ENCODE measurements at regions of chr19 and their contacts with region 1.

Region 1: GRCh38 chr19:49224856-49225255 is 67.3 kb downstream of the TRPM4 start:
- DNase-seq: peak; percentile 46
- ATAC-seq: no peak
- H3K4me3 Mint-ChIP-seq: no peak overlapping the region
- H3K27ac Mint-ChIP-seq: no peak overlapping the region
- H3K4me1 Mint-ChIP-seq: peaks cover 5% of the 10 kb centered on the region
- H3K27me3 Mint-ChIP-seq: peaks cover 6% of the 10 kb centered on the region

Region 2: DNA sequence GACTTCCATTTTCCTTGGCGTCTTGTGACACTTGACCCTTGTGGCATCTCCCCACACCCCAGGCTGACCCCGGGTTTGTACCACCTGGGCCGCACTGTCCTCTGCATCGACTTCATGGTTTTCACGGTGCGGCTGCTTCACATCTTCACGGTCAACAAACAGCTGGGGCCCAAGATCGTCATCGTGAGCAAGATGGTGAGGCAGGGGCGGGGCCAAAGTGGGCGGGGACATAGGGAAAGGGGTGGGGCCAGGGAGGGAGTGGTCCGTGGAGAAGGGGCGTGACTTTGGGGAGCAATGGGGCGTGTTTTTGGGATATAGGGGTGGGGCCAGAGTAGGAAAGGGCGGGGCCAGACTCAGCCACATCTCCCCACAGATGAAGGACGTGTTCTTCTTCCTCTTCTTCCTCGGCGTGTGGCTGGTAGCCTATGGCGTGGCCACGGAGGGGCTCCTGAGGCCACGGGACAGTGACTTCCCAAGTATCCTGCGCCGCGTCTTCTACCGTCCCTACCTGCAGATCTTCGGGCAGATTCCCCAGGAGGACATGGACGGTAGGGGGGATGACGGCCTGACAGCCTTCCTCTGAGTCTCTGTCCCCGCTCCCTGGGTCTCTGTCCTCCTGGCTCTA is 24.5 kb before region 1 on chr19:
- CTCF ChIA-PET with region 1: interaction called, 16 read pairs
- DNase-seq: no peak
- ATAC-seq: no peak
- H3K4me3 Mint-ChIP-seq: no peak overlapping the region
- H3K27ac Mint-ChIP-seq: no peak overlapping the region
- H3K4me1 Mint-ChIP-seq: peaks cover 6% of the 10 kb centered on the region
- H3K27me3 Mint-ChIP-seq: peaks cover 7% of the 10 kb centered on the region

Region 3: DNA sequence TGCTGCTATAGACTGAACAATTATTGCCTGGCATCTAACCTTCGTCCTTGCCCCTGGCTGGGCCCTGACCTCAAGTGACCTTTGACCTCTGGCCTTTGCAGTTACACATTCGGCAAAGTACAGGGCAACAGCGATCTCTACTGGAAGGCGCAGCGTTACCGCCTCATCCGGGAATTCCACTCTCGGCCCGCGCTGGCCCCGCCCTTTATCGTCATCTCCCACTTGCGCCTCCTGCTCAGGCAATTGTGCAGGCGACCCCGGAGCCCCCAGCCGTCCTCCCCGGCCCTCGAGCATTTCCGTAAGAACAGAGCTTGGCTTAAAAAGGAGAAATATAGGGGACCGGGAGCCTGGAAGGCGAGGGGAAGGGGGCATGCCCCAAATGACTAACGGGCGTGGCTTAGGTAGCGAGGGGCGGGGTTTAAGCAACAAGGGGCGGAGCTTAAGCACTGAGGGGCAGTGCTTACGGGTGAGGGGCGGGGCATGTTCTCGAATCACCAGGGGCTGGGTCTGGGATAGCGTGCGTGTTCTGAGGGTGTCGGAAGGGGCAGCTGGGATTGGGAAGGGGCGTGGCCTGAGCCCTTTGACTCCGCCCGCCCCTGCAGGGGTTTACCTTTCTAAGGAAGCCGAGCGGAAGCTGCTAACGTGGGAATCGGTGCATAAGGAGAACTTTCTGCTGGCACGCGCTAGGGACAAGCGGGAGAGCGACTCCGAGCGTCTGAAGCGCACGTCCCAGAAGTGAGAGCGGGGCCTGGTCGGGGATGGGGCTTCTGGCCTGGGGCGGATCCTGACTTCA is 14.6 kb before region 1 on chr19:
- CTCF ChIA-PET with region 1: interaction called, 18 read pairs
- DNase-seq: peak; percentile 51
- ATAC-seq: peak; percentile 64
- H3K4me3 Mint-ChIP-seq: no peak overlapping the region
- H3K27ac Mint-ChIP-seq: no peak overlapping the region
- H3K4me1 Mint-ChIP-seq: peaks cover 9% of the 10 kb centered on the region
- H3K27me3 Mint-ChIP-seq: peaks cover 6% of the 10 kb centered on the region

Region 4: GRCh38 chr19:49256691-49257090 is 31.8 kb after region 1 on chr19:
- CTCF ChIA-PET with region 1: interaction called, 10 read pairs
- DNase-seq: no peak
- ATAC-seq: no peak
- H3K4me3 Mint-ChIP-seq: no peak overlapping the region
- H3K27ac Mint-ChIP-seq: no peak overlapping the region
- H3K4me1 Mint-ChIP-seq: no peaks in the 10 kb centered on the region
- H3K27me3 Mint-ChIP-seq: peaks cover 30% of the 10 kb centered on the region

Region 5: GRCh38 chr19:49282184-49282583 is 57.3 kb after region 1 on chr19:
- CTCF ChIA-PET with region 1: no interaction called
- DNase-seq: no peak
- ATAC-seq: no peak
- H3K4me3 Mint-ChIP-seq: no peak overlapping the region
- H3K27ac Mint-ChIP-seq: no peak overlapping the region
- H3K4me1 Mint-ChIP-seq: no peaks in the 10 kb centered on the region
- H3K27me3 Mint-ChIP-seq: peaks cover 7% of the 10 kb centered on the region

Region 6: GRCh38 chr19:49301165-49301865 is 76.5 kb after region 1 on chr19:
- CTCF ChIA-PET with region 1: interaction called, 11 read pairs
- DNase-seq: peak; percentile 87
- ATAC-seq: peak; percentile 100
- H3K4me3 Mint-ChIP-seq: no peak overlapping the region
- H3K27ac Mint-ChIP-seq: no peak overlapping the region
- H3K4me1 Mint-ChIP-seq: no peaks in the 10 kb centered on the region
- H3K27me3 Mint-ChIP-seq: peaks cover 11% of the 10 kb centered on the region

Measured in activated CD8-positive, alpha-beta memory T cell treated with anti-CD3 and anti-CD28 coated beads, Interleukin-2, amount 10 ng/mL, durations not matched to agents 7 days and 5 days (primary cell).